ENCODE measurements at regions of chr17 and their contacts with region 1.

Region 1: GRCh38 chr17:50547035-50547735 is at the start of gene SPATA20:
- DNase-seq: peak; percentile 95 to 96
- H3K4me3 ChIP-seq: peak within 1 kb of the TSS; percentile 55 to 66
- H3K27ac ChIP-seq: peak within 1 kb of the TSS; percentile 68 to 81
- H3K4me1 ChIP-seq: peaks cover 6 to 26% (median 18%) of the 10 kb centered on the region in 4 donors
- H3K27me3 ChIP-seq: no peaks in the 10 kb centered on the region
- CTCF ChIP-seq: peak; percentile 99

Region 2: GRCh38 chr17:50604513-50604912 is 57.3 kb after region 1 on chr17:
- intact Hi-C with region 1: no loop called
- DNase-seq: no peak
- H3K4me3 ChIP-seq: no peak overlapping the region
- H3K27ac ChIP-seq: no peak overlapping the region
- H3K4me1 ChIP-seq: peaks cover 0 to 12% (median 8%) of the 10 kb centered on the region in 4 donors
- H3K27me3 ChIP-seq: peaks cover 0 to 20% of the 10 kb centered on the region in 2 donors
- CTCF ChIP-seq: no peak

Region 3: DNA sequence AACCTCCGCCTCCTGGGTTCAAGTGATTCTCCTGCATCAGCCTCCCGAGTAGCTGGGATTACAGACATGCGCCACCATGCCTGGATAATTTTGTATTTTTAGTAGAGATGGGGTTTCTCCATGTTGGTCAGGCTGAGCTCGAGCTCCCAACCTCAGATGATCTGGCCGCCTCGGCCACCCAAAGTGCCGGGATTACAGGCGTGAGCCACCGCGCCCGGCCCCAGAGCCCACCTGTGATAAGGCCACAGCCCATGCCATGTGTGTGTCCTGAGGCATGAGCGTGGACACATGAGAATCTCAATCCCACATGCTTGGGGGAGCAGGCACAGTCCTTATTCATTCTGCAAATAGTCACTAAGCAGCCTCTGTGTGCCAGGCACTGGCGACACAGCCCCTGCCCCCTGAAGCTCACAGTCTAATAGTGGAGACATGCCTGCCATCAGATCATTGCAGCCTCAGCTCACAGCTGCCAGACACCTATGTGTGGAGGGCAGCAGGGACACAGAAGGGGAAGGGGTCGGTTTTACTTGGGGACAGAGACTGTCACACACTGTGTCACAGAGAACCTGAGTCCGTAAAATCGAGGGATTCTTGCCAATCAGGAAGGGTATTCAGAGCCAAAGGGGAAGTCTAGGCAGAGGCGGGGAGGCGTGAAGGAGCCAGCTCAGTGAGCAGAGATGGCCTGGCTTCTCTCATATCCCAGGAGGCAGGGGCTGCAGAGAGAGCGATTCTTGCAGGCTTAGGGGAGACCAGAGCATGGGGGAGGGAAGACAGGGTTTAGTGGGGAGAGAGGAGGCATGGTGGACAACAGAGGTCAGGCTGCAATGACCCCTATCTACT is 78.1 kb after region 1 on chr17:
- intact Hi-C with region 1: loop called (anchors 1 kb)
- DNase-seq: no peak
- H3K4me3 ChIP-seq: no peak overlapping the region
- H3K27ac ChIP-seq: no peak overlapping the region
- H3K4me1 ChIP-seq: peaks cover 0 to 9% (median 4%) of the 10 kb centered on the region in 4 donors
- H3K27me3 ChIP-seq: peaks cover 0 to 52% of the 10 kb centered on the region in 2 donors
- CTCF ChIP-seq: no peak

Region 4: DNA sequence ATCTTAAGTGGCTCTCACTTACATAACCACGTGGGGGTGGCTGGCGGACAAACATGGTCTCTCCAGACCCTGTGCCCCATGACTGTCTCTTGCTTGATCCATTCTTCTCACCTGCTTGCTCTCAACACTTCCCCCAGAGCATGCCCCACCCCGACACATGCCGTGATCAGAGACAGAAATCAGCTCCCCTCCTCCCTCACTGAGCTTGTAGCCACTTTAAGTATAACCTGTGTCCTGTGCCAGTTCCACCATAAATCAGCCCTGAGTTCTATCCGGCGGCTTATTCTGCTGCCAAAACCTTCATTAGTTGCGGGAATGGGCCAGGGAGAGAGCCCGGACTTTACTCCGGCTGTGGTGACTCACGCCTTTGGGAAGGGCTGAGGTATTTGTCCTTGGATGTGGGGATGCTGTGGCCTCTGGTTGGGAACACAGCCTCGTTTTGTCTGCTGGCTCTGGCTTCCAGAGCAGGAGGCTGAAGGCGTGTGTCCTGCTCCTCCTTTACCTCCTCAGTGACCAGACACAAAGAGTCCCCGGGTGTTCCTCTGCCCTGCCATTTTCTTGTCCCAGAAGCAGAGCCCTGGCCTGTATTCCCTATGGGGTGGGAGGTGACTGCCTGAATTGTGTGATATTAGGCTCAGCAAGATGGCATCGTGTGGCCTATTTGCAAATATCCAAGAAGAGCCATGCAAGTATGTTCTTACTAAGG is 139.5 kb after region 1 on chr17:
- intact Hi-C with region 1: loop called (anchors 5 kb)
- DNase-seq: peak; percentile 88 to 94
- H3K4me3 ChIP-seq: no peak overlapping the region
- H3K27ac ChIP-seq: peak overlapping the region; percentile 75 to 76
- H3K4me1 ChIP-seq: peaks cover 3 to 46% (median 34%) of the 10 kb centered on the region in 4 donors
- H3K27me3 ChIP-seq: no peaks in the 10 kb centered on the region
- CTCF ChIP-seq: no peak

Region 5: DNA sequence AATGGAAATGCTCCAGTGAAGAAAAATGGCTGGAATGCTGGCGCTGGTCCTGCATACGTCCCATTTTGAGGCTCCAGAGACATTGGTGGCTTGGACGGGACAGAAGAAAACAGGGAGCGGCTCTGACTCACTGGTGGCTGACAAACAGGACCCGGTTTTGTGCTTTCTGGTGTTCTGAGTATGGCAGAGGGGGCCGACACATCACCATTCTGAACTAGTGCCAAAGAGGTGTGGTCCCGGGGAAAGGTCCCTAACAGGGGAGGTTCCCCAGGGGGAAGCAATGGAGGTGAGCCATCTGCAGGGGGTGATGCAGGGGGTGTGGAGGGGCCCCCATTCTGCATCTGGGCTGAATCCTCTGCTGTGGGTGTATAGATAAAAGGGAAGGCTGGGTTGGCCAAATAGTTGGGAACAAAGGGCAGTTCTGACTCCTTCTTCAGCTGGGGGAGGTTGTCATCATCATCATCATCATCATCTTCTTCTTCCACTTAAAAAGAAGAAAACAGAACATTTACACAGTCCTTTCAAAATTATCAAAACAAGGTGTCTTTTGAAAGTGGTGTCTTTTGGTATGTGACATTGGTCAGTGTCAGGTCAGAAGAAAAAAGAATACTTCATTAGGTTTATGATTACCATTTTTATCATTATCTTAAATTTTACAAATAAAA is 152.4 kb after region 1 on chr17:
- intact Hi-C with region 1: loop called (anchors 5 kb)
- DNase-seq: no peak
- H3K4me3 ChIP-seq: no peak overlapping the region
- H3K27ac ChIP-seq: no peak overlapping the region
- H3K4me1 ChIP-seq: peaks cover 0 to 32% (median 13%) of the 10 kb centered on the region in 4 donors
- H3K27me3 ChIP-seq: no peaks in the 10 kb centered on the region
- CTCF ChIP-seq: no peak

Measured in tibial artery (tissue), 4 donors.